ENCODE measurements at regions of chr2 and their contacts with region 1.

Region 1: DNA sequence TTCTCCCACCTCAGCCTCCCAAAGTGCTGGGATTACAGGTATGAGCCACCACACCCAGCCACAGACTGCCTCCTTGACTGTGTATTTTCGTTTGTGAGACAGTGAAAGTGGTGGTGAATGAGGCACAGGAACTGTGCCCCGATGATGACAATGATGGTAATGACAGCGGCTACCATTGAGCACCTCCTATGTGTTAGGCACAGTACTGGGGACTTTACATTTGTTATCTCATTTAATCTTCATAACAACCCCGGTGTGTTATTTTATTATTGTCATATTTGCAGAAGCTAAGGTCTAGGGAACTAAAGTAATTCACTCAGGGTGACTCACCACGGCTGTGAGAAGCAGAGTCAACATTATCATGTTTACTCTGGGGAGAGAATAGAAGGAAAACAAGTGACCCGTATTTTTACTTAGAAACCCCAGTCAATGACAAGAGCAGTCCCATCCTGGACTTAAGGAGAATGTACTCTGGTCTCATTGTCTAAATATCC is 77.6 kb upstream of the ALPP start:
- DNase-seq: no peak
- ATAC-seq: no peak
- H3K4me3 Mint-ChIP-seq: no peak overlapping the region
- H3K27ac Mint-ChIP-seq: no peak overlapping the region
- H3K4me1 Mint-ChIP-seq: peaks cover 16% of the 10 kb centered on the region
- H3K27me3 Mint-ChIP-seq: no peaks in the 10 kb centered on the region

Region 2: GRCh38 chr2:232183279-232183678 is 117.7 kb before region 1 on chr2:
- CTCF ChIA-PET with region 1: no interaction called
- DNase-seq: no peak
- ATAC-seq: no peak
- H3K4me3 Mint-ChIP-seq: no peak overlapping the region
- H3K27ac Mint-ChIP-seq: no peak overlapping the region
- H3K4me1 Mint-ChIP-seq: no peaks in the 10 kb centered on the region
- H3K27me3 Mint-ChIP-seq: no peaks in the 10 kb centered on the region

Region 3: GRCh38 chr2:232315049-232315922 is 14.3 kb after region 1 on chr2:
- CTCF ChIA-PET with region 1: interaction called, 20 read pairs
- DNase-seq: peak; percentile 94
- ATAC-seq: peak; percentile 94
- H3K4me3 Mint-ChIP-seq: peak overlapping the region; percentile 46
- H3K27ac Mint-ChIP-seq: peak overlapping the region; percentile 93
- H3K4me1 Mint-ChIP-seq: peaks cover 67% of the 10 kb centered on the region
- H3K27me3 Mint-ChIP-seq: no peaks in the 10 kb centered on the region

Region 4: DNA sequence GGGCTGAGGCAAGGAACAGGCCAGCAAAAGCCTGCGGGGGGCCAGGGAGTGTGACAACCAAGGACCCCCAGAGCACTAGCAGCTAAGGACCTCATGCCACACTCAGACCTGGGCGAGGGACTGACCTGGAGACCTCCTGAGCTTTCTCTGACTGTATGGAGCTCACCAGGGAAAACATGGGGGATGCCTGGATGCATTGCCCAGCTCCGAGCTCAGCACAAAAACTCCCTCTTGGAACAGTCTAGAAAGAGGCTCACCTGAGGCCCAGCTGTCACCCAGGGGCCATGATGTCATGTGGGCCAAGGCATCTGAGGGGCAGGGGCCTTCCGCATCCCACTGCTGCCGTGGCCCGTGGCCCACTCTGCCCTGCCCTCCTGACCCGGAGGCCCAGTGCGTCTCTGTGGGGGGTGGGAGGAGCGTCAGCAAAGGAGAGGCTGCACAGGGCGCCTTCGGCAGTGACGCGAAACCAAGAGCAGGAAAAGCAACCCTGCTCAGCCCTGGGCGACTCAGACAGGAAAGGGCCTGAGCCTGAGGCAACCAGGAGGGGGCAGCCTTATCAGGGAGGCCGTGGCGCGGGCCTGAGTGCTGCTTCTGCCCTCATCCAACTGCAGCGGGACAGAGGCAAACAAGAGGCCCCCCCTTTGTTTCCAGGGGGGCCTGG is 20.3 kb after region 1 on chr2:
- CTCF ChIA-PET with region 1: interaction called, 18 read pairs
- DNase-seq: peak; percentile 88
- ATAC-seq: peak; percentile 93
- H3K4me3 Mint-ChIP-seq: peak overlapping the region; percentile 47
- H3K27ac Mint-ChIP-seq: peak overlapping the region; percentile 83
- H3K4me1 Mint-ChIP-seq: peaks cover 48% of the 10 kb centered on the region
- H3K27me3 Mint-ChIP-seq: no peaks in the 10 kb centered on the region

Region 5: GRCh38 chr2:232365621-232366321 is 64.8 kb after region 1 on chr2:
- CTCF ChIA-PET with region 1: no interaction called
- DNase-seq: peak; percentile 54
- ATAC-seq: peak; percentile 78
- H3K4me3 Mint-ChIP-seq: no peak overlapping the region
- H3K27ac Mint-ChIP-seq: no peak overlapping the region
- H3K4me1 Mint-ChIP-seq: peaks cover 18% of the 10 kb centered on the region
- H3K27me3 Mint-ChIP-seq: no peaks in the 10 kb centered on the region